Left lung (tissue), 14 donors: ENCODE measurements at regions of chr3 and their contacts with region 1.

Region 1: DNA sequence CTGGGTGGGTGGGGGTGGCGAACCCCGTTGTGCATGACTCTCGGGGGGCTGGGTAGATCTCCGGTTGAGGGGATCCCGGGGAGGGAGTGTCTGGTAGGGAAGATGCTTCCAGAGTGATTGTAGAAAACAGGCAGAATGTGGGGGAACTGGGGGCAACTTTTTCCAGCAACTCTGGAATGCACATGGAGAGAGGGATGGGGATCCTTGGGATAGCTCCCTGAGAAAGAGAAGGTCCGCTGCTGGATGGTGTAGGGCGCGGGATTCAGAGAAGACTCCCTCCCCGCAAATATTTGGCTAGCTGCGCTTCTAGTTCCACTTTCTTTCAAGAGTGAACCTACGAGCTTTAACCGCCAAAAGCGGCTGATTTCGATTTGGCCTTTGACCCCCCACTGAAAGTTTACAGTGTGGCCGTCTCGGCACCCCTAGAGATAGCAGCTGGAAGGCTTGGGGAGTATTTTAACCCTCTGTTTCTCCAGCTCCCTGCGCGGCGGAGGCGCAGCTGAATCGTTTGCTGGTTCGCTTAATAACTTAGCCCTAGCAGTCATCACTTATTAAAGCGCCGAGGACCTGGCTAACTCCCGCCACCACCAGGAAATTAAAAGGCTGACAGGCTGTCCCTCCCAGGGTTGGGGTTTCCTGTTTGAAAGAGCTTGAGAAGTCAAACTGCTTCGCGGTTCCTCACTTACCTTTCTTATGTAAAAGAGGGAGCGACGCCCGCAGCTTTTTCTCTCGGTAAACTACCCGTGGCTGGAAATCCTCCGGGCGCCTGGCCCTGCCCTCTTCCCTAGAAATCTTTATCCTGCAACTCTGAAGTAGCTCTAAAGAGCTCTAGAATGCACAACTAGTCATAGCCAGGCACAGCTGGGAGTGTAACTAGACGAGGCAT is 1.2 kb downstream of the PHLDB2 start:
- DNase-seq: peak; percentile 75 to 92 (median 82)
- ATAC-seq: peak; percentile 81
- H3K4me3 ChIP-seq: peak overlapping the region; percentile 56 to 60
- H3K27ac ChIP-seq: peak overlapping the region; percentile 86 to 95
- H3K4me1 ChIP-seq: peaks cover 14 to 29% of the 10 kb centered on the region in 2 donors
- H3K27me3 ChIP-seq: peaks cover 0 to 30% of the 10 kb centered on the region in 2 donors
- CTCF ChIP-seq: peak; percentile 32 to 43

Region 2: DNA sequence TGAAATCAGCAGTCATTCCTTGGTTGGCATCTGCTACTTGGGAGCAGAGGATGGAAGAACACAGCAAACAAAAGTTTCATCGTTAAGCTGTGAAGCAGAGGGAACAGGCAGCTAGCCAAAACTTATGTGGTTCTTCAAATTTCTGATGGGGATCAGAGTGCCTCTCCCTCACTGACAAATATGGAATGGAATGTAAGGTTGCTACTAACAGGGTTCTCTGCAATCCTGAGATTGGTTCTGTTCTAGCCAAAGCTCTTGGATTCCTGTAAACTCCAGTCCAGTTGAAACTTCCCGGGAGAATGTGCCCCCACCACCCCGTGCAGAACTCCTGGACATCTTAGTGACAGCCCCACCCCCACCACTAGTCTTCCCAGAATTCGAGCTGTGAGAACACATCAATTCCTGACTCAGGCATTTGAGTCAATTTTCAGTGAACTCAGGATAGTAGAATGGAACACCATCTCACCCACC is 57.1 kb before region 1 on chr3:
- intact Hi-C with region 1: loop called in 1 of 2 experiments (anchors 10 kb)
- DNase-seq: peak in 2 of 4 donors; percentile 49 to 69
- ATAC-seq: peak; percentile 92
- H3K4me3 ChIP-seq: no peak overlapping the region
- H3K27ac ChIP-seq: peak overlapping the region; percentile 68 to 80
- H3K4me1 ChIP-seq: peaks cover 6 to 9% of the 10 kb centered on the region in 2 donors
- H3K27me3 ChIP-seq: no peaks in the 10 kb centered on the region
- CTCF ChIP-seq: no peak

Region 3: DNA sequence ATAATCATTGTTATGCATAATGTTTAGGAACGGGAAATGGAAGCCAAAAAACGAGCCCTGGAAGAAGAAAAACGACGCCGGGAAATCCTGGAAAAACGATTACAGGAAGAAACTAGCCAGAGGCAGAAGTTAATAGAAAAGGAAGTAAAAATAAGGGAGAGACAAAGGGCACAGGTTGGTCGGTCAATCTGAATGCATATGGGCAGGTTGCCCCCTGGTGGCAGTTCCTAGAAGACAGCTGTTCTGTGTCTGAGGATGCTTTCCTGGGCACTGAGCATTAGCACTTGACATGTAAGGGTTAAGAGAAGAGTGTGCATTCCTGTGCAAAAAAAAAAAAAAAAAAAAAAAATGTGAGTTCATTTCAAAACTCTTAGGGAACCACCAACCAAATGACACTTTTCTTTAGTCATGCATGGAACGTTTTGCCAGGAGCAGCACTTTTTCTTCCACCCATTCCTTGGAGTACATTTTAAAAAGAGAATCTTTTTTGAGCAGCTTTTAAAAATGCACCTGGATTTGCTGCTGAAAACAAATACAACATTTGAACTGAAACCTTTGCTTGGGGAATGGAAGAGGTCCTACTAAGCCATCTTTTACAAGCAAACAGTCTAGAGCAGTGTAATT is 107.5 kb after region 1 on chr3:
- intact Hi-C with region 1: loop called in 1 of 2 experiments (anchors 10 kb)
- DNase-seq: peak; percentile 60 to 85 (median 75)
- ATAC-seq: peak; percentile 98
- H3K4me3 ChIP-seq: no peak overlapping the region
- H3K27ac ChIP-seq: peak overlapping the region in 1 of 2 donors; percentile 55
- H3K4me1 ChIP-seq: peaks cover 0 to 10% of the 10 kb centered on the region in 2 donors
- H3K27me3 ChIP-seq: no peaks in the 10 kb centered on the region
- CTCF ChIP-seq: peak; percentile 82 to 89